ENCODE measurements at regions of chr13 and their contacts with region 1.

Region 1: GRCh38 chr13:109786457-109787134 is at the start of gene IRS2:
- DNase-seq: peak; percentile 95
- H3K4me3 Mint-ChIP-seq: peak within 1 kb of the TSS; percentile 75
- H3K27ac Mint-ChIP-seq: peak within 1 kb of the TSS; percentile 56
- H3K4me1 Mint-ChIP-seq: peaks cover 17% of the 10 kb centered on the region
- H3K27me3 Mint-ChIP-seq: peaks cover 7% of the 10 kb centered on the region
- total RNA-seq, gene IRS2: 2.3 to 2.5 TPM

Region 2: GRCh38 chr13:108915634-108916512 is 870.7 kb before region 1 on chr13:
- CTCF ChIA-PET with region 1: no interaction called
- POLR2A ChIA-PET with region 1: no interaction called
- intact Hi-C with region 1: loop called (anchors 5 kb)
- DNase-seq: peak; percentile 95
- H3K4me3 Mint-ChIP-seq: peak overlapping the region; percentile 68
- H3K27ac Mint-ChIP-seq: peak overlapping the region; percentile 78
- H3K4me1 Mint-ChIP-seq: peaks cover 20% of the 10 kb centered on the region
- H3K27me3 Mint-ChIP-seq: no peaks in the 10 kb centered on the region

Region 3: DNA sequence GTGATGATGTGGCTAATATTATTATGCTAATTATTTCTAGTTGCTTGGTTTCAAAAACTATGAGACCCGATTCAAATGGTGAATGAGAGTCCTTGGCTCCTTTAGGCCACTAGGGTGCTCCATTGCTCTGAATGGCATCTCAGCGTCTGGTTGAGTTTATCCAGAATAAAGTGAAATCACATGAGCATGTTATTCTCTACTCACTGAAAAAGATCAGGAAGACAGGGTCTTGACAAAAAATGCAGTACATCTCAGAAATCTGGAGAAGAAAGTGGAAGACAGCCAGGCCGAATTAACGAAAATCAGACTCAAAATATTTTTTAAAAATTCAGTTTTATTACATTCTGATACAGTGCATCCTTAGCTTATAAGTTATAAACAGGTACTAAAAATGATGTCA is 641.0 kb before region 1 on chr13:
- CTCF ChIA-PET with region 1: interaction called, 5 read pairs
- POLR2A ChIA-PET with region 1: no interaction called
- intact Hi-C with region 1: loop called (anchors 2 kb)
- DNase-seq: peak; percentile 18
- H3K4me3 Mint-ChIP-seq: no peak overlapping the region
- H3K27ac Mint-ChIP-seq: no peak overlapping the region
- H3K4me1 Mint-ChIP-seq: no peaks in the 10 kb centered on the region
- H3K27me3 Mint-ChIP-seq: peaks cover 11% of the 10 kb centered on the region

Region 4: DNA sequence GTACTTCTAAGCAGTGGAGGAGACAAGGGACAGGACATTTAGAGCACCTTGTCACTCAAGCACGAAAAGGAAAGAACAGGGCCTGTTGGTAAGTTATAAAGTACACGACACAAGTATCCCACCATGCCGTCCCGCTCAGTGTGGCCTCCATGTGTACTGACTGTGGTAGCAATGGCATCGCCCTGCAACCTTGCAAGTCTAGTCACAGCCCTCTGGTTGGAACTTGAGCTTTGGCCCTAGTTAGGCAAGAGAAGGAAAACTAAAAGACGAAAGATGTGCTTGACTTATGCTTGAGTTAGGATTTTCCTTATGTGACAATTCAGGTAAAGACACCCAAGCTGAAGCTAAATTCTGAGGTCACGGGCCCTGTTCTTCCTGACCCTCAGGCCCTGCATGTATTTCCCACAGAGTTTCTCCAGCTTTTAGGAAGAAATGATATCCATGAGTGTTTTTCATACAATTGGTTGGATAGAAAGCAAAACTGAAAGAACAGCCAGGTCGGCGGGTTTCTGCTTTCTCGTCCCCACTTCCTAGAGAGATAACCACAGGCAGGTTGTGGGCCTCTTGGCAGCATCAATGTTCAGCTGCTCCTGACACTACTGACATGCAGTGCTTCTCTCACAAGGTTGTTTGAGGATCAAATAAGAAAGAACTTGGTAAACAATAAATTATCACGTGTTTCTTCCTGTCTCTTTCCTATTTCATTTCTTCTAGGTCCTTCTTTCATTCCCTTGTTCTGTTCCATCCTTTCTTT is 216.5 kb before region 1 on chr13:
- CTCF ChIA-PET with region 1: no interaction called
- POLR2A ChIA-PET with region 1: no interaction called
- intact Hi-C with region 1: loop called (anchors 5 kb)
- DNase-seq: peak; percentile 53
- H3K4me3 Mint-ChIP-seq: no peak overlapping the region
- H3K27ac Mint-ChIP-seq: no peak overlapping the region
- H3K4me1 Mint-ChIP-seq: peaks cover 10% of the 10 kb centered on the region
- H3K27me3 Mint-ChIP-seq: no peaks in the 10 kb centered on the region

Region 5: GRCh38 chr13:109874484-109875454 is 88.2 kb after region 1 on chr13:
- CTCF ChIA-PET with region 1: no interaction called
- POLR2A ChIA-PET with region 1: no interaction called
- intact Hi-C with region 1: no loop called
- DNase-seq: no peak
- H3K4me3 Mint-ChIP-seq: no peak overlapping the region
- H3K27ac Mint-ChIP-seq: no peak overlapping the region
- H3K4me1 Mint-ChIP-seq: no peaks in the 10 kb centered on the region
- H3K27me3 Mint-ChIP-seq: peaks cover 13% of the 10 kb centered on the region

Region 6: GRCh38 chr13:110116072-110116487 is 329.5 kb after region 1 on chr13:
- CTCF ChIA-PET with region 1: no interaction called
- POLR2A ChIA-PET with region 1: no interaction called
- intact Hi-C with region 1: loop called (anchors 5 kb)
- DNase-seq: peak; percentile 65
- H3K4me3 Mint-ChIP-seq: no peak overlapping the region
- H3K27ac Mint-ChIP-seq: no peak overlapping the region
- H3K4me1 Mint-ChIP-seq: no peaks in the 10 kb centered on the region
- H3K27me3 Mint-ChIP-seq: peaks cover 27% of the 10 kb centered on the region

Region 7: DNA sequence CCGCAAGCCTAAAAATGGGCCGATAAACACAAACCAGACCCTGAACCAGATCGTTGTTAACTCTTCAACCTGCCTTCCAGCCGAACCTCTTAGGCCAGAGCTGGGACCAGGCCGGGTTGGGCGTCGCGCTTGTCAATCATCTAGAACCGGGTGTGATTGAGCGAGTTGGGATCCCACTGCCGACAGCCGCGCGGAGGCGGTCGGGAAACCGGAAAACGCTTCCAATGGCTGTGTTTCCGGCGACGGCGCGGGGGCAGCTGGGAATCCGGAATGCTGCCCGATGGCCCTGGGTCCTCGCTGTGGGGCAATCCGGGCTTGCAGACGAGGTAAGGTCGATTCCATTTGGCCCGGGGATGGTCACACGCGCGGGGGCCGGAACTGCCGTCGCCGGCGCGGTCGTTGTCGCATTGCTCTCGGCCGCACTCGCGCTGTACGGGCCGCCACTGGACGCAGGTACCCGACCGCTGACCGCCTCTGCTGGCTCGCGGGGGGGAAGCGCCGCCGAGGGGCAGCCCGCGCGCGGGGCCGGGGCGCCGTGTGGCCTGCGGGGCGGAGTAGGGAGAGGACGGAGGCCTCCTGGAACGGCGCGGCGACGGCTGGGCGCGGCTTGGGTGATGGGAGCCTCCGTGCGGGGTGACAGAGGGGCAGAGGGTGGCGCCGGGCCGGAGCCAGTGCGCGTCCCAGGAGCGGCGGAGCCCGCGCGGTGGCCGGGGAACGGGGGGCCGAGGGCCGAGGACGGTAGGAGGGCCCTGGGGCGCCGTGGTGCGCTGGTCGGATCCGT is 828.9 kb after region 1 on chr13 and contains the start of gene NAXD:
- CTCF ChIA-PET with region 1: no interaction called
- POLR2A ChIA-PET with region 1: no interaction called
- intact Hi-C with region 1: loop called (anchors 5 kb)
- DNase-seq: peak; percentile 93
- H3K4me3 Mint-ChIP-seq: peak within 1 kb of the TSS; percentile 94
- H3K27ac Mint-ChIP-seq: peak within 1 kb of the TSS; percentile 88
- H3K4me1 Mint-ChIP-seq: peaks cover 48% of the 10 kb centered on the region
- H3K27me3 Mint-ChIP-seq: no peaks in the 10 kb centered on the region
- total RNA-seq, gene NAXD: 22.6 to 22.9 TPM

Measured in activated CD4-positive, alpha-beta memory T cell treated with anti-CD3 and anti-CD28 coated beads for 36 hours (primary cell).